Activated CD4-positive, alpha-beta memory T cell treated with anti-CD3 and anti-CD28 coated beads for 36 hours (primary cell): ENCODE measurements at regions of chr9 and their contacts with region 1.

Region 1: GRCh38 chr9:133149126-133150107 is 14.3 kb downstream of the GBGT1 start:
- DNase-seq: peak; percentile 90
- H3K4me3 Mint-ChIP-seq: peak overlapping the region; percentile 65
- H3K27ac Mint-ChIP-seq: peak overlapping the region; percentile 62
- H3K4me1 Mint-ChIP-seq: peaks cover 33% of the 10 kb centered on the region
- H3K27me3 Mint-ChIP-seq: no peaks in the 10 kb centered on the region

Region 2: GRCh38 chr9:132944302-132945185 is 204.9 kb before region 1 on chr9 and contains the start of gene TSC1:
- CTCF ChIA-PET with region 1: interaction called, 4 read pairs
- POLR2A ChIA-PET with region 1: no interaction called
- intact Hi-C with region 1: loop called (anchors 10 kb)
- DNase-seq: peak; percentile 98
- H3K4me3 Mint-ChIP-seq: peak within 1 kb of the TSS; percentile 84
- H3K27ac Mint-ChIP-seq: peak within 1 kb of the TSS; percentile 95
- H3K4me1 Mint-ChIP-seq: peaks cover 26% of the 10 kb centered on the region
- H3K27me3 Mint-ChIP-seq: no peaks in the 10 kb centered on the region
- total RNA-seq, gene TSC1: 19.6 to 23.6 TPM

Region 3: GRCh38 chr9:133030317-133031129 is 118.9 kb before region 1 on chr9 and contains the start of gene GTF3C5:
- CTCF ChIA-PET with region 1: interaction called, 42 read pairs
- POLR2A ChIA-PET with region 1: interaction called, 7 read pairs
- intact Hi-C with region 1: loop called (anchors 1 kb)
- DNase-seq: peak; percentile 95
- H3K4me3 Mint-ChIP-seq: peak within 1 kb of the TSS; percentile 99
- H3K27ac Mint-ChIP-seq: peak within 1 kb of the TSS; percentile 90
- H3K4me1 Mint-ChIP-seq: peaks cover 42% of the 10 kb centered on the region
- H3K27me3 Mint-ChIP-seq: no peaks in the 10 kb centered on the region
- total RNA-seq, gene GTF3C5: 80.3 to 81.2 TPM

Region 4: DNA sequence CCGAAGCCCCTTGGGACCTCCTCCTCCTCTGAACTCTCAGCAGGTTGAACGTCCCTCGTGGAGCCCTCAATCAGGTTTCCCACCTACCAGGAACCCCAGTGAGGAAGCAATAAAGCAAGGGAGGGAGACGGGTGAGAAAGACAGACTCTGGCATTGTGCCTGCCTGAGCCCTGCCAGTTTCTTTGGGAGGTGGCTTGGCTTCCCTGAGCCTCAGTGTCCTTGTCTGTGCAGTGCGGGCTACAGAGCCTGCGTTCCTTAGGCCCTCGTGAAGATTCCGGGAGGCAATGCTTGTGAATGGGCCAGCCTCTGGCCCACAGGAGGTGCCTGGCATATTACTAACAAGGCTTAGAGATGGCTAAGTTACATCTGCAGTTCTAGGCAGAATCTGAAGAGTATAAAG is 106.7 kb before region 1 on chr9:
- CTCF ChIA-PET with region 1: interaction called, 18 read pairs
- POLR2A ChIA-PET with region 1: no interaction called
- intact Hi-C with region 1: loop called (anchors 1 kb)
- DNase-seq: no peak
- H3K4me3 Mint-ChIP-seq: no peak overlapping the region
- H3K27ac Mint-ChIP-seq: no peak overlapping the region
- H3K4me1 Mint-ChIP-seq: peaks cover 10% of the 10 kb centered on the region
- H3K27me3 Mint-ChIP-seq: no peaks in the 10 kb centered on the region

Region 5: GRCh38 chr9:133115448-133116345 is 33.7 kb before region 1 on chr9:
- CTCF ChIA-PET with region 1: interaction called, 552 read pairs
- POLR2A ChIA-PET with region 1: interaction called, 7 read pairs
- intact Hi-C with region 1: loop called (anchors 1 kb)
- DNase-seq: peak; percentile 89
- H3K4me3 Mint-ChIP-seq: peak overlapping the region; percentile 56
- H3K27ac Mint-ChIP-seq: peak overlapping the region; percentile 91
- H3K4me1 Mint-ChIP-seq: peaks cover 68% of the 10 kb centered on the region
- H3K27me3 Mint-ChIP-seq: no peaks in the 10 kb centered on the region

Region 6: GRCh38 chr9:133375724-133376654 is 226.6 kb after region 1 on chr9 and contains the starts of genes STKLD1 and SURF4:
- CTCF ChIA-PET with region 1: interaction called, 3 read pairs
- POLR2A ChIA-PET with region 1: no interaction called
- intact Hi-C with region 1: loop called (anchors 5 kb)
- DNase-seq: peak; percentile 97
- H3K4me3 Mint-ChIP-seq: peak within 1 kb of the TSS; percentile 97
- H3K27ac Mint-ChIP-seq: peak within 1 kb of the TSS; percentile 96
- H3K4me1 Mint-ChIP-seq: peaks cover 35% of the 10 kb centered on the region
- H3K27me3 Mint-ChIP-seq: no peaks in the 10 kb centered on the region
- total RNA-seq, gene STKLD1: 0.69 to 0.90 TPM
- total RNA-seq, gene SURF4: 358 to 368 TPM